Activated B cell treated with CpG ODN at 0.5 μM for 24 hours (primary cell): ENCODE measurements at regions of chr17 and their contacts with region 1.

Region 1: GRCh38 chr17:82871056-82871903 is 31.5 kb upstream of the ZNF750 start:
- DNase-seq: peak; percentile 68
- ATAC-seq: peak; percentile 84
- H3K4me3 Mint-ChIP-seq: peak overlapping the region; percentile 75
- H3K27ac Mint-ChIP-seq: peak overlapping the region; percentile 91
- H3K4me1 Mint-ChIP-seq: peaks cover 62% of the 10 kb centered on the region
- H3K27me3 Mint-ChIP-seq: peaks cover 3% of the 10 kb centered on the region
- CTCF ChIP-seq: no peak

Region 2: GRCh38 chr17:82751571-82752370 is 119.5 kb before region 1 on chr17 and contains the start of gene TBCD:
- CTCF ChIA-PET with region 1: no interaction called
- POLR2A ChIA-PET with region 1: no interaction called
- intact Hi-C with region 1: no loop called
- DNase-seq: peak; percentile 86
- ATAC-seq: peak; percentile 88
- H3K4me3 Mint-ChIP-seq: peak within 1 kb of the TSS; percentile 84
- H3K27ac Mint-ChIP-seq: no peak within 1 kb of the TSS
- H3K4me1 Mint-ChIP-seq: peaks cover 22% of the 10 kb centered on the region
- H3K27me3 Mint-ChIP-seq: no peaks in the 10 kb centered on the region
- CTCF ChIP-seq: no peak
- total RNA-seq, gene TBCD: 49.9 and 50.9 TPM in 2 replicates

Region 3: DNA sequence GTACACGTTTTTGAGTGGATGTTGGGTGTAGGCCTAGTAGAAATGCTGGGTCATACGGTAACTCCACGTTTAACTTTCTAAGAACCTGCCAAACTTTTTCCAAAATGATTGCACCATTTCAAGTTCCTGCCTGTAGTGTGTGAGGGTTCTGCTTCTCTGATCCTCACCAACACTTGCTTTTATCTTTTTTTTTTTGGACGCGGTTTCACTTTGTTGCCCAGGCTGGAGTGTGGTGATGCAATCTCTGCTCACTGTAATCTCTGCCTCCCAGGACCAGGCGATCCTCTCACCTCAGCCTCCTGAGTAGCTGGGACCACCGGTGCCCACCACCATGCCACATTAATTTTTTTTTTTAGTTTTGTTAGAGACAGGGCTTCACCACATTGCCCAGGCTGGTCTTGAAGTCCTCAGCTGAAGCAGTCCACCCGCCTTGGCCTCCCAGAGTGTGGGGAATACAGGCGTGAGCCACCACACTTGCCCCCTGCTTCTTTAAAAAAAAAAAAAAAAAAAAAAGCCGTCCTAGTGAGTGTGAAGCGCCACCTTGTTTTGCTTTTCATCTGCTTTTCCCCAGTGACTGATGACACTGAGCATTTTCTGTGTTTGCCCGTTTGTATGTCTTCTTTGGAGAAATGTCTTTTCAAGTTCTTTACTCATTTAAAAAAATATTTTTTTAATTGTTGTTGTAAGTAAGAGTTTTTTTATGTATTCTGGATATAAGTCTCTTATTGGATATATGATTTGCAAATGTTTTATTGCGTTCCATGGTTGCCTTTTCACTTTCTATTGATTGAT is 54.7 kb before region 1 on chr17:
- CTCF ChIA-PET with region 1: interaction called, 6 read pairs
- POLR2A ChIA-PET with region 1: interaction called, 26 read pairs
- intact Hi-C with region 1: loop called (anchors 1 kb)
- DNase-seq: no peak
- ATAC-seq: no peak
- H3K4me3 Mint-ChIP-seq: no peak overlapping the region
- H3K27ac Mint-ChIP-seq: no peak overlapping the region
- H3K4me1 Mint-ChIP-seq: peaks cover 29% of the 10 kb centered on the region
- H3K27me3 Mint-ChIP-seq: no peaks in the 10 kb centered on the region
- CTCF ChIP-seq: no peak

Region 4: DNA sequence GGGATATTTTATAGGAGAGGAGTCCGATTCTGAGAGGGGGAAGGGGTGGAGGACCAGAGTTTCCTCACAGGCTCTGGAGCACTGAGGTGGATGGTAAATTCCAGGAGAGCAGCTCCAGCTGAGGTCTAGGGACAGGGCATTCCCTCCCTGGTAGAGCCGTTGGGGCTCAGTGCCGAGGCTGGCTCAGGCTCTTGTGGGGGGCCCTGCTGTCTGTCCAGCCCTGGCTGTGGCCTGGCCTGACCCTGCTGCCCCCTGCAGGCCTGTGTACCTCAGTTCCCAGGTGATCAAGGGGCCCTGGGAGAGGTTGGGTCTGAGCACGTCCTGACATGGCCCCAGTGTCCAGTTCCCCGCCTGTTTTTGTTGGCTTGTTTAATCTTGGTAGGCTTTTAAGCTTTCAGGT is 48.3 kb before region 1 on chr17:
- CTCF ChIA-PET with region 1: interaction called, 6 read pairs
- POLR2A ChIA-PET with region 1: interaction called, 26 read pairs
- intact Hi-C with region 1: loop called (anchors 1 kb)
- DNase-seq: no peak
- ATAC-seq: no peak
- H3K4me3 Mint-ChIP-seq: no peak overlapping the region
- H3K27ac Mint-ChIP-seq: no peak overlapping the region
- H3K4me1 Mint-ChIP-seq: peaks cover 22% of the 10 kb centered on the region
- H3K27me3 Mint-ChIP-seq: no peaks in the 10 kb centered on the region
- CTCF ChIP-seq: no peak

Region 5: GRCh38 chr17:82848022-82848592 is 23.2 kb before region 1 on chr17:
- CTCF ChIA-PET with region 1: no interaction called
- POLR2A ChIA-PET with region 1: no interaction called
- intact Hi-C with region 1: loop called (anchors 2 kb)
- DNase-seq: no peak
- ATAC-seq: no peak
- H3K4me3 Mint-ChIP-seq: no peak overlapping the region
- H3K27ac Mint-ChIP-seq: no peak overlapping the region
- H3K4me1 Mint-ChIP-seq: peaks cover 15% of the 10 kb centered on the region
- H3K27me3 Mint-ChIP-seq: no peaks in the 10 kb centered on the region
- CTCF ChIP-seq: no peak

Region 6: GRCh38 chr17:82882715-82883418 is 11.6 kb after region 1 on chr17:
- CTCF ChIA-PET with region 1: interaction called, 5 read pairs
- POLR2A ChIA-PET with region 1: interaction called, 42 read pairs
- intact Hi-C with region 1: loop called (anchors 2 kb)
- DNase-seq: no peak
- ATAC-seq: peak; percentile 47
- H3K4me3 Mint-ChIP-seq: peak overlapping the region; percentile 24
- H3K27ac Mint-ChIP-seq: no peak overlapping the region
- H3K4me1 Mint-ChIP-seq: peaks cover 55% of the 10 kb centered on the region
- H3K27me3 Mint-ChIP-seq: no peaks in the 10 kb centered on the region
- CTCF ChIP-seq: no peak

Region 7: GRCh38 chr17:82917691-82918345 is 46.5 kb after region 1 on chr17:
- CTCF ChIA-PET with region 1: interaction called, 9 read pairs
- POLR2A ChIA-PET with region 1: interaction called, 6 read pairs
- intact Hi-C with region 1: loop called (anchors 2 kb)
- DNase-seq: no peak
- ATAC-seq: no peak
- H3K4me3 Mint-ChIP-seq: no peak overlapping the region
- H3K27ac Mint-ChIP-seq: no peak overlapping the region
- H3K4me1 Mint-ChIP-seq: peaks cover 27% of the 10 kb centered on the region
- H3K27me3 Mint-ChIP-seq: no peaks in the 10 kb centered on the region
- CTCF ChIP-seq: no peak

Region 8: DNA sequence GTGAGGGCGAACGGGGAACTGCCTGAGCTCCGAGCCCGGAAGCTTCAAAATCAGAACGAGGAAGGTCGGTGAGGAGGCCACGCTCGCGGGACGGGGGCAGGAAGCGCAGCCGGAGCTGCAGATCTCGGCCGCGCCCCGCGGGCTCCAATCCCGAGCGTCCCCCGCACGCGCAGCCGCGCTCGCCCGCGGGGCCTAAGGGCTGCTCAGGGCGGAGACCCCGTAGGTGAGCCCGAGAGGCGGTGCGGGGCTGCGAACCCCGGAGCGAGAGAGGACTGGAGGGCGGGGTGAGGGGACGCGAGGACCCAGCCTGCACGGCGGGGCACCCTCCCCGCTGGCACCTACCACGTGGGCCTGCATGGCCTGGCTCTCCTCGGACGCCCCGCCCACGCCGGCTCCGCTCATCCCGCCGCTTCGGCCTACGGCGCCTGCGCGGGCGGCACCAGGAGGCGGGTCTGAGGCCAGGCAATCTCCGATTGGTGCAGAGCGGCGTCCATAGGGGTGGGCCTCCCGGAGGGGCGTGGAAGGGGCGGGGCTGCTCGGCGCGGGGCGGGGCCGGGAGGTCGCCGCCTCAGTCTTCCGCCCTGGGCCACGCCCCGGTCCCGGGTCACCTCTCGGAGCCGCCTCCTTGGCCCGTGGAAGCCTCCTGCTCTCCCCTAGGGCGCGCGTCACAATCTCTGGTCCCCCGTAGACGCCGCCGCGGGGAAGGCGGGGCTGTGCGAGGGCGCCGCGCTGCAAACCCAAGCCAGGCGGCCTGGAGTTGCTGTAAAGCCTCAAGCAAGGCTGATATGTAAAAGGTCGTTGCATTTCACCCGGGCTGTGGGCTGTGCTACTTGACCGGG is 180.3 kb after region 1 on chr17:
- CTCF ChIA-PET with region 1: no interaction called
- POLR2A ChIA-PET with region 1: interaction called, 6 read pairs
- intact Hi-C with region 1: loop called (anchors 5 kb)
- DNase-seq: peak; percentile 97
- ATAC-seq: peak; percentile 85
- H3K4me3 Mint-ChIP-seq: peak overlapping the region; percentile 79
- H3K27ac Mint-ChIP-seq: peak overlapping the region; percentile 78
- H3K4me1 Mint-ChIP-seq: peaks cover 31% of the 10 kb centered on the region
- H3K27me3 Mint-ChIP-seq: no peaks in the 10 kb centered on the region
- CTCF ChIP-seq: no peak